ENCODE measurements at regions of chr1 and their contacts with region 1.

Region 1: DNA sequence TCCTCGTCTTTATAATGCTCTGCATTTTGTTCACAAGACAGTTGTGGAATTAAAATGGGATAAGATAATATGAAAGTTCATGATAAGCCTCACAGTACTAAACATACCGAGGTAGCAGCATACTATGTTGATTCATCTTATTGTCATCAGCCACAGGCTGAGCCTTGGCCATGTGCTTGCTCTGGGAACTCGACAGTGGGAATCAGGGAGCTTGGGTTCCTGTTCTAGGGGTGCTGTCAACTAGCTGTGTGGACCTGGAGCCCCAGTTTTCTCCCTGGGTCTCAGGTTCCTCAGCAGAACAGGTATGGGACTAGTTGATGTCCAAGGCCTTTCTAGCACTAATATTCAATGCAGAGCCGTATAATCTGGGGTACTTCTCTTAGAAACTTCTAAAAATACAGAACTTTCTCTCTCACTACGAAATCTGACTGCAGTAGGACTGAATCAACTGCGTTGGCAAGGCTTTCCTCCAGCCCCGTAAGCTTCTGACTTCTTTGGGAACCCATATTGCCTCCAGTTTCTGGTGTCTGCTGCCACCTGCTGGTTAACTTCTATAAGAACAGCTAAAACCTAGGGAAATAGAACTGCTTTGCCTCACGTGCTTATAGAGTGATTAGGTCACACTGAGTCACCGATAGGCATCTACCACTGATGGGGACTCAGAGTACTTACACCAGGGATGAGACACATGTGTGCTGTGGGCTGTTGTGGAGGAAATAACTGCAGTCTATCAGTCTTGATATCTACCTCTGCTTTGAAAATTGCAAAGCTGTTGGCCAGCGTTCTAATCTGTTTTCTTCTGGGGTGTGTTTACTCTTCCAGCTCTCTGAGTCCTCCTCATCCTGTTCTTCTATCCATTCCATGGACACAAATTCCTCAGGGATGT is 110.9 kb downstream of the RGL1 start:
- DNase-seq: peak; percentile 94
- H3K4me3 ChIP-seq: no peak overlapping the region
- CTCF ChIP-seq: peak; percentile 75

Region 2: DNA sequence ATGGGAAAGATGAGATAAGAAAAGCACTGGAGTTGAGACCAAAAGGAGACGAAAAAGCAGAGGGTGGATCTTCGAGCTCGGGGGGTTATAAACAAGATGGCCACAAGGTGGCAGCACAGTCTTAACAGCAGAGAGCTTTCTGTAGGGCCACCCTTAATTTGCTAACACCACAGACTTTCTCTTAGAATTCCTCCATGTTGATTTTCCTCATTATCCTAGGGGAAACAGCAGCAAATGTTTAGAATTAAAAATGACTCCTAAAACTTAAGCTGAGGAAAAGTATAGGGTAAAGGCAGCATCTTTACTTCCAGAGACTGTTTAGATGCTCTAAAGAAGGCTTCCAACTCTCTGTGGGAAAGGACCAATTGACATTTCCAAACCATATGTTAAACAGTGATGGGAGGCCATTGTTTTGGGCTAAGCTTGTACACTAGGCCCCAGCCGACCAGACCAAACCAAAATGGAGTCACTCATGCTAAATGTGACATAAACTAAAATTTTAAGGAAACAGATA is 260.2 kb before region 1 on chr1:
- in situ Hi-C with region 1: loop called (anchors 10 kb)
- DNase-seq: peak; percentile 73
- H3K4me3 ChIP-seq: no peak overlapping the region
- CTCF ChIP-seq: peak; percentile 75